Naive thymus-derived CD4-positive, alpha-beta T cell (primary cell): ENCODE measurements at regions of chr3 and their contacts with region 1.

Region 1: DNA sequence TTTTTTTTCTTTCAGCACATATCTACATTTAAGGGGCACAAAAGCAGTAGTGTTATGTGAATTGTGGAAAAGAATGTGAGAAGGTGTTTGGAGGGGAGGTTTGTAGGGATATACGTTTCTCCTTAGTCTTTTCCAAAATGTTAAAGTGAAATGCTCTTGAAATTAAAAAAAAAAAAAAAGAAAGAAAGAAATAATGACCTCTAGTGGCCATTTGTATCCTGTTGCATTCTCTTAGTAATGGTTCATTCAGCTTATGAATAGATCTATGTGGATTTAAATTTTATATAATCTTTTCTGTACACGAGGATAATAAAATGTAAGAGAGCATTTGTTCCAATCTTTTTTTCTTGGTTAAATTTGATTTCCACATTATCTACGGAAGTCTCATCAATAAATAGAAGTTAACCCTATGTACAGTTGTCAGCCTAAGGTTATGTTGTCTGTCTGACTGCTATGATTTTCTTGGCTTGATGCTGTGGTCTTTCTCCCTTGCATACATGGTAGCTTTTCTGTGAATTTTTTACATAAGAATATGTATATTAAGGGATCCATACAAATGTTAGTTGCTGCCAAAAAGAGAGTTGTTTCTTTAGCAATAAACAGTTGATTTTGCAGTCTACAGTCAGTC is 1.7 kb downstream of the P2RY13 start:
- DNase-seq: no peak
- ATAC-seq: no peak
- H3K4me3 ChIP-seq: no peak overlapping the region
- H3K4me3 Mint-ChIP-seq: no peak overlapping the region
- H3K27ac ChIP-seq: no peak overlapping the region
- H3K27ac Mint-ChIP-seq: no peak overlapping the region
- H3K4me1 ChIP-seq: no peaks in the 10 kb centered on the region
- H3K4me1 Mint-ChIP-seq: peaks cover 4 to 7% (median 6%) of the 10 kb centered on the region in 7 donors
- H3K27me3 ChIP-seq: no peaks in the 10 kb centered on the region
- H3K27me3 Mint-ChIP-seq: peaks cover 10 to 30% (median 19%) of the 10 kb centered on the region in 5 donors

Region 2: GRCh38 chr3:151156618-151157216 is 171.0 kb before region 1 on chr3:
- CTCF ChIA-PET with region 1: interaction called, 3 read pairs
- POLR2A ChIA-PET with region 1: no interaction called
- intact Hi-C with region 1: loop called in 1 of 2 experiments (anchors 1 kb)
- DNase-seq: peak in 7 of 9 donors; percentile 27 to 53 (median 44)
- ATAC-seq: peak; percentile 82
- H3K4me3 ChIP-seq: no peak overlapping the region
- H3K4me3 Mint-ChIP-seq: no peak overlapping the region
- H3K27ac ChIP-seq: no peak overlapping the region
- H3K27ac Mint-ChIP-seq: no peak overlapping the region
- H3K4me1 ChIP-seq: no peaks in the 10 kb centered on the region
- H3K4me1 Mint-ChIP-seq: no peaks in the 10 kb centered on the region
- H3K27me3 ChIP-seq: no peaks in the 10 kb centered on the region
- H3K27me3 Mint-ChIP-seq: peaks cover 0 to 13% (median 0%) of the 10 kb centered on the region in 5 donors